K562 (cell line): ENCODE measurements at regions of chr9 and their contacts with region 1.

Region 1: GRCh38 chr9:124708633-124709291 is 62.3 kb downstream of the NR6A1 start:
- DNase-seq: peak in 1 of 4 experiments; percentile 20
- ATAC-seq: peak; percentile 18; the same call in 2 of the 3 replicates
- H3K4me3 ChIP-seq: no peak overlapping the region
- H3K27ac ChIP-seq: no peak overlapping the region
- H3K4me1 ChIP-seq: peaks cover 0 to 11% of the 10 kb centered on the region in 2 experiments; a peak in 2 of 5 replicates
- H3K27me3 ChIP-seq: no peaks in the 10 kb centered on the region
- CTCF ChIP-seq: no peak
- EP300 ChIP-seq: no peak
- POLR2A ChIP-seq: no peak
- RAD21 ChIP-seq: no peak

Region 2: DNA sequence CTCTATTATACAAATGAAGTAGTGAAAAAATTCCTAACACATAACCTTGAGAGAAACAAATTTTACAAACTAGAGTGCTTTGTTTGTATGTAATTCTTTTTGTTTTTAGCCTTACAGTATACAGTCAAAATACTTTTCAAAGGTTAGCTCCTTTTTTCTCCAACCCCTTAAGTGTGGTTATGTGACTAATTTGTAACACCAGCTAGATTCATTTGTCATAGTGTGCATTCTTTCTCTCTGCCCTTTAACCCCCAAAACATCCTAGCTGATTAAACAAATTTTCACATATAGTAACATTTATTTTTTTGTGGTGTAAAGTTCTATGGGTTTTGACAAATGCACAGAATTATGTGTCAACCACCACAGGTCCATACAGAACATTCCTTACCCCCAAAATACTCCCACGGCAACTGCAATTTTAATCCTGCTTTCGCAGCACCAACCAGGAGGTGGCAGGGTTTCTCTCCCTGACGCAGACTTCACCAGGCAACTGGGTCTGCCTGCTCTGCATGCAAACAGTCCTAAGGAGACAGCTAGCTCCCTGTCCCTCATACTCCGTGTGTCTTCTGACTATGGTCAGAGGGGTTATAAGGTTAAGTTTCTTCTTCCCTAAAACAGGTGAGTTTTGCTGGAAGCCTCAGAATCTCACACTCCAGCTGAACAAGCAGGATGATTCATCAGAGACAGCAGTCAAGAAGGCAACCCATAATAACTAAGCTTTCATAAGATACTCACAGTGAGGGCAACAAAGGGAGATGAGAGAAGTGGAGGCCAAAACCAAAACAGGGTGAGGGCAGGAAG is 157.1 kb before region 1 on chr9:
- CTCF ChIA-PET with region 1: interaction called, 84 read pairs
- POLR2A ChIA-PET with region 1: no interaction called
- in situ Hi-C with region 1: loop called (anchors 5 kb)
- intact Hi-C with region 1: loop called (anchors 1 kb)
- DNase-seq: peak; percentile 38 to 70 (median 56)
- ATAC-seq: peak; percentile 95
- H3K4me3 ChIP-seq: no peak overlapping the region
- H3K27ac ChIP-seq: no peak overlapping the region
- H3K4me1 ChIP-seq: no peaks in the 10 kb centered on the region
- H3K27me3 ChIP-seq: no peaks in the 10 kb centered on the region
- CTCF ChIP-seq: peak; percentile 77 to 80 (median 80)
- EP300 ChIP-seq: no peak
- POLR2A ChIP-seq: no peak
- RAD21 ChIP-seq: peak; percentile 77 to 84

Region 3: GRCh38 chr9:124754289-124754688 is 45.5 kb after region 1 on chr9:
- CTCF ChIA-PET with region 1: interaction called, 9 read pairs
- POLR2A ChIA-PET with region 1: interaction called, 4 read pairs
- in situ Hi-C with region 1: no loop called
- intact Hi-C with region 1: loop called (anchors 1 kb)
- DNase-seq: peak in 3 of 4 experiments; percentile 27 to 60 (median 44)
- ATAC-seq: peak; percentile 83
- H3K4me3 ChIP-seq: no peak overlapping the region
- H3K27ac ChIP-seq: peak overlapping the region; percentile 68; the same call in 2 of the 3 replicates
- H3K4me1 ChIP-seq: peaks cover 0 to 40% of the 10 kb centered on the region in 2 experiments; a peak in 3 of 5 replicates
- H3K27me3 ChIP-seq: no peaks in the 10 kb centered on the region
- CTCF ChIP-seq: peak; percentile 64 to 75 (median 75)
- EP300 ChIP-seq: peak; percentile 52
- POLR2A ChIP-seq: no peak
- RAD21 ChIP-seq: peak; percentile 72 to 81

Region 4: GRCh38 chr9:124764774-124765438 is 56.1 kb after region 1 on chr9:
- CTCF ChIA-PET with region 1: interaction called, 22 read pairs
- POLR2A ChIA-PET with region 1: no interaction called
- in situ Hi-C with region 1: no loop called
- intact Hi-C with region 1: loop called (anchors 2 kb)
- DNase-seq: peak in 3 of 4 experiments; percentile 25 to 55 (median 51)
- ATAC-seq: peak; percentile 69
- H3K4me3 ChIP-seq: no peak overlapping the region
- H3K27ac ChIP-seq: no peak overlapping the region
- H3K4me1 ChIP-seq: peaks cover 2 to 31% of the 10 kb centered on the region in 2 experiments
- H3K27me3 ChIP-seq: no peaks in the 10 kb centered on the region
- CTCF ChIP-seq: peak; percentile 42 to 72 (median 59); a peak in 5 of 6 replicates
- EP300 ChIP-seq: no peak
- POLR2A ChIP-seq: no peak
- RAD21 ChIP-seq: peak; percentile 41 to 70

Region 5: DNA sequence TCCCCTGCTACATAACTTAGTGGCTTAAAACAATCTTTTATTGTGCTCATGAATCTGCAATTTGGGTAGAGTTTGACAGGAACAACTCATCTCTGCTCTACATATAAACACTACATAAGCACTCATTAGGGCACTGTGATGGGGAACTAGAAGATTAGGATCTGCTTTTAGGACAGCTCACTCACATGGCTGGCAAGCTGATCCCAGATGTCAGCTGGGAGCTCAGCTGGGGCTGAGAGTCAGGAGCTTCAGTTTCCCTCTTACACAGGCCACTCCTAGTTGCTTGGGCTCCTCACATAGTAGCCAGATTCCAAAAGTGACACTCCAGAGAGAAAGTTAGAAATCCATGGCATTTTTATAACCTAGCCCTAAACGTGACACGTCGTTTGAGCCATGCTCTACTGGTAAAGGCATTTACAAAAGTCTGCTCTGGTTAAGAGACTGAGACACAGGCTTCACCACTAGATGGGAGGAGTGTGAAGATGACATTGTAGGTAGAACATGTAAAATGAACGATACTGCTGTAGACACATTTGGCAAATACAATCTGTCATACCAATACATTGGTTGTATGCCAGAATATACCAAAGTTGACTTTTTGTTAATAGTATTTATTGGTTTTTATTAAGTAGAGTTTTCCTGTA is 411.0 kb after region 1 on chr9:
- CTCF ChIA-PET with region 1: no interaction called
- POLR2A ChIA-PET with region 1: no interaction called
- in situ Hi-C with region 1: no loop called
- intact Hi-C with region 1: no loop called
- DNase-seq: peak in 2 of 4 experiments; percentile 17 to 44
- ATAC-seq: peak; percentile 83
- H3K4me3 ChIP-seq: no peak overlapping the region
- H3K27ac ChIP-seq: peak overlapping the region; percentile 21; the same call in 1 of the 3 replicates
- H3K4me1 ChIP-seq: peaks cover 3 to 9% of the 10 kb centered on the region in 2 experiments; a peak in 4 of 5 replicates
- H3K27me3 ChIP-seq: no peaks in the 10 kb centered on the region
- CTCF ChIP-seq: peak in 2 of 3 experiments; percentile 27 to 44; a peak in 3 of 6 replicates
- EP300 ChIP-seq: no peak
- POLR2A ChIP-seq: no peak
- RAD21 ChIP-seq: peak; percentile 8 to 43; a peak in 2 of 4 replicates